ENCODE measurements at regions of chr4 and their contacts with region 1.

Region 1: GRCh38 chr4:158850800-158851644 is 82.2 kb downstream of the FNIP2 start:
- DNase-seq: no peak
- ATAC-seq: peak; percentile 35; the same call in 1 of the 3 replicates
- H3K4me3 ChIP-seq: no peak overlapping the region
- H3K27ac ChIP-seq: no peak overlapping the region
- H3K4me1 ChIP-seq: no peaks in the 10 kb centered on the region
- H3K27me3 ChIP-seq: no peaks in the 10 kb centered on the region; a peak in 1 of 4 replicates
- CTCF ChIP-seq: peak; percentile 49 to 55 (median 53); a peak in 5 of 6 replicates
- EP300 ChIP-seq: no peak
- POLR2A ChIP-seq: no peak
- RAD21 ChIP-seq: peak; percentile 50

Region 2: DNA sequence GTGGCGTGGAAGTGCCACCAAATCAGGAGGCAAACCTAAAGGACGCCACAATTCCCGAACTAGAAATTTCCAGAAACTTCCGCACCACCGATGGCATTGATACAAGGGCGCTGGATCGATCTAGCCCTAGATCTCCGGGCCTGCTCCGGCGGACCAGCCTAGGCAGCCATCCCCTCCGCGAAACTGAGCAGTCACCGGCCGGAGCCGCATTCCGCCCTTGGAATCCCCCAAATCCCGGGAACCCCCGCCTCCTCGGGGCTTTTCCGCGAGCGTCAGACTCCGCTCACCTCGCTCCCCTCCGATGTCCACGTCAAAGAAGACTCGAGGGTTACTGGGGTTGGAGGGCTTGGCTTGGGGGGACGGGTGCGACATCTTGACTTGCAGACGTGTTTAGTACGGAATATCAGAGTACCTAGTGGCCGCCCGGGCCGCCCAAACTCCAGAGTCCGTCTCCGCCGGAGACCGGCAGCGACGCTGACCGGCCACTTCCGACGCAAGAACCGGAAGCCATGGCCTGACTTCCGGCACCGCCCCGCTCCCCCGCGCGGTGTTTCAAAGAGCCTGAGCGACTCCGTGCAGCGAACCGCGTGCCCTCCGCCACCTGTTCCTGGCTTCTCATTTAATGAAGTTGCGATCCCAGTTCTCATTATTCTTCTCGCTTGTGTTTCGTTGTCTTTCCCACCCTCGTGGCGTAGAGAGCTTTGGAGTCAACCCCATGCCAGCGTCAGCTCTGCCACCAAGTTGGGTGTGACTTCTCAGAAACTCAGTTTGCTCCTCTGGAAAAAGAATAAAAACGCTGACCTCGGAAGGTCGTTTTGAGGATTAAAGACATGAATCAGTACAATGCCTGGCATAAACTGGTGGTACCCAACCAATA is 127.9 kb before region 1 on chr4 and contains the start of gene PPID:
- CTCF ChIA-PET with region 1: interaction called, 61 read pairs
- POLR2A ChIA-PET with region 1: interaction called, 3 read pairs
- RAD21 ChIA-PET with region 1: interaction called, 15 read pairs
- SMC1A ChIA-PET with region 1: interaction called, 21 read pairs
- in situ Hi-C with region 1: no loop called
- intact Hi-C with region 1: no loop called
- DNase-seq: peak; percentile 49
- ATAC-seq: peak; percentile 97
- H3K4me3 ChIP-seq: peak within 1 kb of the TSS; percentile 96
- H3K27ac ChIP-seq: peak within 1 kb of the TSS; percentile 82
- H3K4me1 ChIP-seq: no peaks in the 10 kb centered on the region
- H3K27me3 ChIP-seq: no peaks in the 10 kb centered on the region
- CTCF ChIP-seq: no peak
- EP300 ChIP-seq: no peak
- POLR2A ChIP-seq: peak; percentile 87
- RAD21 ChIP-seq: no peak
- polyA plus RNA-seq, gene PPID: 24.4 to 43.9 TPM

Region 3: GRCh38 chr4:158786121-158786601 is 64.9 kb before region 1 on chr4:
- CTCF ChIA-PET with region 1: interaction called, 61 read pairs
- POLR2A ChIA-PET with region 1: no interaction called
- RAD21 ChIA-PET with region 1: interaction called, 33 read pairs
- SMC1A ChIA-PET with region 1: interaction called, 42 read pairs
- in situ Hi-C with region 1: no loop called
- intact Hi-C with region 1: no loop called
- DNase-seq: no peak
- ATAC-seq: no peak
- H3K4me3 ChIP-seq: no peak overlapping the region
- H3K27ac ChIP-seq: peak overlapping the region; percentile 22; the same call in 1 of the 2 replicates
- H3K4me1 ChIP-seq: no peaks in the 10 kb centered on the region
- H3K27me3 ChIP-seq: no peaks in the 10 kb centered on the region
- CTCF ChIP-seq: no peak
- EP300 ChIP-seq: no peak
- POLR2A ChIP-seq: no peak
- RAD21 ChIP-seq: no peak

Region 4: DNA sequence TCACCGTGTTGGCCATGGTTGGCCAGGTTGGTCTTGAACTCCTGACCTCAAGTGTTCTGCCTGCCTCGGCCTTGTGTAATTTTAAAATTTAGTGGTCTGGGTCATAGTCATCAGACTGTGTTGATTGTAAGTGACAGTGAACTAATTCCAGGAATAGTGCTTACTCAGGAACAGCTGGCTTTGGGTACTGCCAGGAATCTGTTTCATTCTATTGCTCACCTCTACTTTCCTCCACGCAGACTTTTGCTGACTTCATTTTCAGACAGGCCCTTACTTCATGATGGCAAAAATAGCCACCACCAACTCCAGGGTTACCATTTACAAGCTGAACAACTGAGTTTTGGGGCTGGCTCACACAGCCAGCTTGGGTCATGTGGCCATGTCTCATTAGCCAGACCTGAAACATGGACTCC is 27.6 kb before region 1 on chr4:
- CTCF ChIA-PET with region 1: interaction called, 12 read pairs
- POLR2A ChIA-PET with region 1: no interaction called
- RAD21 ChIA-PET with region 1: interaction called, 7 read pairs
- SMC1A ChIA-PET with region 1: interaction called, 50 read pairs
- in situ Hi-C with region 1: no loop called
- intact Hi-C with region 1: no loop called
- DNase-seq: no peak
- ATAC-seq: no peak
- H3K4me3 ChIP-seq: no peak overlapping the region
- H3K27ac ChIP-seq: no peak overlapping the region
- H3K4me1 ChIP-seq: peaks cover 22% of the 10 kb centered on the region
- H3K27me3 ChIP-seq: no peaks in the 10 kb centered on the region
- CTCF ChIP-seq: no peak
- EP300 ChIP-seq: no peak
- POLR2A ChIP-seq: no peak
- RAD21 ChIP-seq: no peak

Region 5: GRCh38 chr4:159175085-159175988 is 324.3 kb after region 1 on chr4:
- CTCF ChIA-PET with region 1: interaction called, 54 read pairs
- POLR2A ChIA-PET with region 1: no interaction called
- RAD21 ChIA-PET with region 1: interaction called, 51 read pairs
- SMC1A ChIA-PET with region 1: interaction called, 69 read pairs
- in situ Hi-C with region 1: loop called (anchors 5 kb)
- intact Hi-C with region 1: no loop called
- DNase-seq: peak; percentile 73
- ATAC-seq: peak; percentile 82
- H3K4me3 ChIP-seq: peak overlapping the region; percentile 60
- H3K27ac ChIP-seq: no peak overlapping the region; the same call in 1 of the 2 replicates
- H3K4me1 ChIP-seq: peaks cover 58% of the 10 kb centered on the region
- H3K27me3 ChIP-seq: no peaks in the 10 kb centered on the region
- CTCF ChIP-seq: peak; percentile 59 to 85 (median 75)
- EP300 ChIP-seq: no peak
- POLR2A ChIP-seq: no peak
- RAD21 ChIP-seq: peak; percentile 98

Region 6: GRCh38 chr4:160009656-160010493 is 1158.9 kb after region 1 on chr4:
- CTCF ChIA-PET with region 1: no interaction called
- POLR2A ChIA-PET with region 1: no interaction called
- RAD21 ChIA-PET with region 1: no interaction called
- SMC1A ChIA-PET with region 1: no interaction called
- in situ Hi-C with region 1: no loop called
- intact Hi-C with region 1: no loop called
- DNase-seq: no peak
- ATAC-seq: no peak
- H3K4me3 ChIP-seq: no peak overlapping the region
- H3K27ac ChIP-seq: no peak overlapping the region
- H3K4me1 ChIP-seq: no peaks in the 10 kb centered on the region
- H3K27me3 ChIP-seq: no peaks in the 10 kb centered on the region
- CTCF ChIP-seq: no peak
- EP300 ChIP-seq: no peak
- POLR2A ChIP-seq: no peak
- RAD21 ChIP-seq: no peak